T-cell (primary cell): ENCODE measurements at regions of chr12 and their contacts with region 1.

Region 1: DNA sequence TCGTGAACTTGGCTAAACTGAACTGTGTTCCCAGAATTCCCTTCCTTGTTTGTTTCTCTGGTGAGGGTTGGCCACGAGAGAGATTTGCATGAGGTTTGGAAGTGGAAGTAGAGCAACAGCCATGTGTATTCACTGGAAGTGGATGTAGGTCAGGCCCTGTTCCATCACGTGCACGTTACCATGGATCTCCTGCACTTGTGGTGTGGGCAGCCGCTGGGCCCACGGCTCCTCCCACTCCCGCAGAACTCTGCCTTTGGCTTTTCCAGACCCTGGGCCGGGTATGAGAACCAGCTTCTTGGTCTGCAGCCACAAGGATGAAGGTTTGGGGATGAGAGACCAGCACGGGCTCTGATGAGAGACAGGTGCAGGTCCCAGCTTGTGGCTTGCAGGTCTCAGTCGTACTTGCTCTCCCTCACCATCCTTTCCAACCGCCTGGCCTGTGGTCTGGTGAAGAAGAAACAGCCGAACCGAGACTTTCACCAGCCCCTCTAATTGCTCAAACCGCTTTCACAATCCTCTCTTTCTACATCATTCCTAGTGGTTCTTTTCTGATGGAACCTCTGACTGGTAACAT is 94.9 kb downstream of the DUSP16 start:
- DNase-seq: peak in 32 of 35 experiments; percentile 13 to 71 (median 40)
- ATAC-seq: peak; percentile 16 to 57 (median 34)
- H3K4me3 ChIP-seq: no peak overlapping the region
- H3K4me3 Mint-ChIP-seq: peak overlapping the region; percentile 50 to 53 (median 53)
- H3K27ac ChIP-seq: peak overlapping the region; percentile 95
- H3K27ac Mint-ChIP-seq: peak overlapping the region; percentile 94 to 95
- H3K4me1 ChIP-seq: peaks cover 23 to 53% of the 10 kb centered on the region in 2 experiments
- H3K4me1 Mint-ChIP-seq: peaks cover 60 to 87% (median 77%) of the 10 kb centered on the region in 3 donors
- H3K27me3 ChIP-seq: no peaks in the 10 kb centered on the region
- H3K27me3 Mint-ChIP-seq: no peaks in the 10 kb centered on the region

Region 2: DNA sequence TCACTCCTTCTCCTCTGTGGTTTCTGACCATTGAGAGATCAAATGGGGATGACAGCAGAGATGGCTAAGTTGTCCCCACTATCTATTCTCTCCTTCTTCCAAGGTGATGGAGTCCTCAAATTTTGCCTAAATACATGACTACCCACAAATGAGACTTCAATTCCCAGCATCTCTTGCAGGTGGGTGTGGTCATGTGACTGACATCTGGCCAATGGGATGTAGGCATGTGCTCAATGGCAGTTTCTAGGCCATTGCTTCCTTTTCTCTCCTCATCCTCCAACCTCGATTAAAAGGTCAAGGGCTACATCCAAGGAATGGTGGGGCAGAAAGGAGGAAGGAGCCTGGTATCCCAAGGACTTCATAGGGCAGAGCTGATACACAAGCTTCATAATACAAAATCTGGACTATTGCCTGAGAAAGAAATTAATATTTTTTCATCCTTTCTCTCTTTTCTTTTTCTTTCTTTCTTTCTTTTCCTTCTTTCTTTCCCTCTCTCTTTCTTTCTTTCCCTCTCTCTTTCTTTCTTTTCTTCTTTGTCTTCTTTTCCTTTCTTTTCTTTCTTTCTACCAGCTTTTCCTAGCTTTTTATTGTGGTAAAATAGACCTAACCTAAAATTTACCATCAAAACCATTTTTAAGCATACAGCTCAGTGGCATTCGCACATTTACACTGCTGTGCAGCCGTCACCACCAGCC is 971.5 kb before region 1 on chr12:
- CTCF ChIA-PET with region 1: no interaction called
- POLR2A ChIA-PET with region 1: no interaction called
- DNase-seq: no peak
- ATAC-seq: no peak
- H3K4me3 ChIP-seq: no peak overlapping the region
- H3K4me3 Mint-ChIP-seq: no peak overlapping the region
- H3K27ac ChIP-seq: no peak overlapping the region
- H3K27ac Mint-ChIP-seq: no peak overlapping the region
- H3K4me1 ChIP-seq: peaks cover 0 to 14% of the 10 kb centered on the region in 2 experiments
- H3K4me1 Mint-ChIP-seq: peaks cover 5 to 11% (median 9%) of the 10 kb centered on the region in 3 donors
- H3K27me3 ChIP-seq: peaks cover 0 to 31% of the 10 kb centered on the region in 2 experiments
- H3K27me3 Mint-ChIP-seq: peaks cover 25 to 27% of the 10 kb centered on the region in 2 donors

Region 3: GRCh38 chr12:12403264-12404248 is 64.2 kb before region 1 on chr12:
- CTCF ChIA-PET with region 1: interaction called in 1 of 2 experiments, 4 read pairs
- POLR2A ChIA-PET with region 1: interaction called, 3 to 16 read pairs
- DNase-seq: peak in 1 of 35 experiments; percentile 44
- ATAC-seq: peak in 3 of 4 experiments; percentile 49 to 89 (median 54)
- H3K4me3 ChIP-seq: no peak overlapping the region
- H3K4me3 Mint-ChIP-seq: no peak overlapping the region
- H3K27ac ChIP-seq: no peak overlapping the region
- H3K27ac Mint-ChIP-seq: peak overlapping the region; percentile 53 to 79
- H3K4me1 ChIP-seq: no peaks in the 10 kb centered on the region
- H3K4me1 Mint-ChIP-seq: peaks cover 26 to 61% (median 48%) of the 10 kb centered on the region in 3 donors
- H3K27me3 ChIP-seq: no peaks in the 10 kb centered on the region
- H3K27me3 Mint-ChIP-seq: no peaks in the 10 kb centered on the region

Region 4: DNA sequence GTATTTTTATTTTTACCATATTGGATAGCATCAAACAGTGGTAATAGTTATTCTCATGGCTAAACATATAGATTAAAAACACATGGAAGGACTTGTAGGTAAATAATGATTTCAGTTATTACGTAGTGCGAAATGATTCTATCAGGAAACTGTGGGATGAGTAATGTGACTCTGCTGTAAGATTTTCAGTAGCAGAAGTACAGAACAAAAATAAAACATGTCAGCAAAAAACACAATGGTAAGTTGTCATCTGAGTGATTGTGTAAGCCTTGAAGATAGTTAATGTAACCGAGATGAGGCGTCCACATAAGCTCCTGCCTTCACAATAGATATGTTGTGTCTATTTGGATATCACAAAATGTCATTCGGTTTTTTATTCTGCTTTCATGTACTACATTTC is 11.1 kb before region 1 on chr12:
- CTCF ChIA-PET with region 1: interaction called, 4 to 10 read pairs
- POLR2A ChIA-PET with region 1: interaction called in 1 of 2 experiments, 32 read pairs
- DNase-seq: peak in 1 of 35 experiments; percentile 46
- ATAC-seq: peak; percentile 43 to 73 (median 59)
- H3K4me3 ChIP-seq: no peak overlapping the region
- H3K4me3 Mint-ChIP-seq: peak overlapping the region; percentile 29 to 42 (median 34)
- H3K27ac ChIP-seq: peak overlapping the region; percentile 79
- H3K27ac Mint-ChIP-seq: peak overlapping the region; percentile 92 to 93
- H3K4me1 ChIP-seq: peaks cover 0 to 18% of the 10 kb centered on the region in 2 experiments
- H3K4me1 Mint-ChIP-seq: peaks cover 31 to 47% (median 42%) of the 10 kb centered on the region in 3 donors
- H3K27me3 ChIP-seq: no peaks in the 10 kb centered on the region
- H3K27me3 Mint-ChIP-seq: no peaks in the 10 kb centered on the region

Region 5: GRCh38 chr12:12482959-12483358 is 15.2 kb after region 1 on chr12:
- CTCF ChIA-PET with region 1: interaction called, 4 to 12 read pairs
- POLR2A ChIA-PET with region 1: interaction called, 14 to 48 read pairs
- DNase-seq: no peak
- ATAC-seq: no peak
- H3K4me3 ChIP-seq: peak overlapping the region in 1 of 2 donors; percentile 45
- H3K4me3 Mint-ChIP-seq: peak overlapping the region; percentile 58 to 84 (median 81)
- H3K27ac ChIP-seq: peak overlapping the region; percentile 97
- H3K27ac Mint-ChIP-seq: peak overlapping the region; percentile 98 to 99
- H3K4me1 ChIP-seq: peaks cover 19 to 23% of the 10 kb centered on the region in 2 experiments
- H3K4me1 Mint-ChIP-seq: peaks cover 37 to 80% (median 79%) of the 10 kb centered on the region in 3 donors
- H3K27me3 ChIP-seq: no peaks in the 10 kb centered on the region
- H3K27me3 Mint-ChIP-seq: no peaks in the 10 kb centered on the region